ENCODE measurements at regions of chr15 and their contacts with region 1.

Region 1: GRCh38 chr15:91852741-91853510 is 582 bp upstream of the SLCO3A1 start:
- DNase-seq: peak; percentile 80
- H3K4me3 Mint-ChIP-seq: peak overlapping the region; percentile 77
- H3K27ac Mint-ChIP-seq: peak overlapping the region; percentile 77
- H3K4me1 Mint-ChIP-seq: peaks cover 58% of the 10 kb centered on the region
- H3K27me3 Mint-ChIP-seq: no peaks in the 10 kb centered on the region

Region 2: DNA sequence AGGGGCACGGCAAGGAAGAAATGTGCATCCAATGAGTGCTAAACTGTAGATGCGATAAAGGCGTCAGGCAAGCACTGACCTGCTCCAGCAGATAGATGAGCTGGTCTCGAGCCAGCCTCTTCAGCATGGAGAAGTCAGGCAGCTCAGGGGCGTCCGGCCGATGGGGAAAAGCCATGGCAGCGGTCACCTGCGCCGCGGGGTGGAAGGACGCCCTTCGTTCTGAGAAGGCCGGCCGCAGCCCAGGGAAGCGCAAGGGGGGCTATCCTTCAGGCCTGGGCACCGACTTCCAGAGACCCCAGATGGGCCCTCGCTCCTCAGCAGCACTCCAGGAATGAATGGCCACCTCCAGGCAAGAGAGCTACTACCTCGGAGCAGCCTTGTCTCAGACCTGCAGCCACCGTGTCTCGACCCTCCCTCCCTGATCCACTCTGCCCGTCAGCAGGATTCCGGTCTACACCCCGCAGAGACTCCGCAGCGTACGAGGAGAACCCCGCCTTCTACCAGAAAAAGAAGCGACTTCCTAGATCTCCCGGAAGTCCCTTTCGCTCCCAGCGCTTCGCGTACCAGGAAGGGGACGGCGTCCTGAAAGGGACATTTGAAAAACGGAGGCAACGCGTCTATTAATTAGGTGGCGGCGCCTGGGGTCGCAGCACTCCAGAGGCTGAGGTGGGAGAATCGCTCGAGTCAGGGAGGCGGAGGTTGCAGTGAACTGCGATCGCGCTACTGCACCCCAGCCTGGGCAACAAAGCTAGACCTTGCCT is 830.7 kb before region 1 on chr15 and contains the start of gene VPS33B:
- CTCF ChIA-PET with region 1: no interaction called
- POLR2A ChIA-PET with region 1: no interaction called
- intact Hi-C with region 1: loop called (anchors 10 kb)
- DNase-seq: peak; percentile 87
- H3K4me3 Mint-ChIP-seq: peak within 1 kb of the TSS; percentile 89
- H3K27ac Mint-ChIP-seq: peak within 1 kb of the TSS; percentile 90
- H3K4me1 Mint-ChIP-seq: peaks cover 32% of the 10 kb centered on the region
- H3K27me3 Mint-ChIP-seq: no peaks in the 10 kb centered on the region
- total RNA-seq, gene VPS33B: 26.4 to 26.5 TPM

Region 3: DNA sequence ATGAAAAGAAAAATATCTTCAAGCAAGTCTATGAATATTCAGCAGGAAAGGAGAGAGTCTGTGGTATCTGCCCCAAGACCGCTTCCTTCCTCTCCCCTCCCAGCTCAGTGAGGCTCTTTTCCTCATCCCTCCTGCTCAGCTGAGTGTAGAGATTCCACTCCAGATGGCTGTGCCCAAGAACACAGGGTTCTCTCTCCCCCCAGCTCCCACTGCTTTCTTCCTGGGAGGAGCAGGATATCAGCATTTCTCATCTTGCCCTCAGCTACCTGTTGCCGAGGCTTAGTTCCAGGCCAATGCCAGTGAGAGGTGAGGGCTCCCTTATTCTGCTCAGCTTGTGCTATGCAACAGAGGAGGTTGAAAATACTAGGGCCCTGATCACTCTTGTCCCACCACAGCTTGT is 540.9 kb before region 1 on chr15:
- CTCF ChIA-PET with region 1: no interaction called
- POLR2A ChIA-PET with region 1: no interaction called
- intact Hi-C with region 1: loop called (anchors 2 kb)
- DNase-seq: peak; percentile 44
- H3K4me3 Mint-ChIP-seq: no peak overlapping the region
- H3K27ac Mint-ChIP-seq: no peak overlapping the region
- H3K4me1 Mint-ChIP-seq: peaks cover 62% of the 10 kb centered on the region
- H3K27me3 Mint-ChIP-seq: peaks cover 3% of the 10 kb centered on the region

Region 4: DNA sequence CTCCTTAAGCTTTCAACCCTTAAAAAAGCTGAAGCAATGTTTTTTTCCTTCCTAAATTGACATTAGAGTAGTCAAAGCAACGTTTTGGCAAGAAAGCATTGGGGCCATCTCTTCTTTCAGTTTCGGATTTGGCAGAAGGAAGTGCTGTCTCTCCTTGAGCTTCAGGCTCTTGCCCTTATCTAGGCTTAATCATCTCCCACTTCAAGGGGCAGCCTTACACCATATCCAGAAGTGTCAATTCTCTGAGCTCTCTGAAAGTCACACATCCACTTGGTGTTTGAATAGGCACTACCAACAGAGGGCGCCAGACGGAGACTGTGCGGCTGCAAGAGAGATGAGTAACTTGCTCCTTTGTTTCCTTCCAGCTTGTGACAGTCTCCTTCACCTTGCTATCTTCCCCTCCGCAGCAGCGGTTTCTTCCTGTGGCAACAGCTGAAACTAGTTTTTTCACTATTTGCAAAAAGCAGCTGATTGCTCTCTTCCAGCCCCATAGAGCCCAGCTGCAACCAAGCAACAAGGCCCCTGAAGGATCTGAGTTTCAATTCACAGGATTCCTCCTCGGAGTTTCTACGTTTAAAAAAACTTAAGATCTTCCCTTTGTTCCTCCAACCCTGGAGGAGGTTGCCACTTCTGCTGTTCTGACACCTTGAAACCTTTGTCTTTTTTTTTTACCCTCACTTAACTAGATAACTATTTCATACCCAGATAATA is 146.4 kb before region 1 on chr15:
- CTCF ChIA-PET with region 1: interaction called, 32 read pairs
- POLR2A ChIA-PET with region 1: interaction called, 6 read pairs
- intact Hi-C with region 1: loop called (anchors 2 kb)
- DNase-seq: peak; percentile 91
- H3K4me3 Mint-ChIP-seq: no peak overlapping the region
- H3K27ac Mint-ChIP-seq: no peak overlapping the region
- H3K4me1 Mint-ChIP-seq: peaks cover 14% of the 10 kb centered on the region
- H3K27me3 Mint-ChIP-seq: no peaks in the 10 kb centered on the region

Region 5: DNA sequence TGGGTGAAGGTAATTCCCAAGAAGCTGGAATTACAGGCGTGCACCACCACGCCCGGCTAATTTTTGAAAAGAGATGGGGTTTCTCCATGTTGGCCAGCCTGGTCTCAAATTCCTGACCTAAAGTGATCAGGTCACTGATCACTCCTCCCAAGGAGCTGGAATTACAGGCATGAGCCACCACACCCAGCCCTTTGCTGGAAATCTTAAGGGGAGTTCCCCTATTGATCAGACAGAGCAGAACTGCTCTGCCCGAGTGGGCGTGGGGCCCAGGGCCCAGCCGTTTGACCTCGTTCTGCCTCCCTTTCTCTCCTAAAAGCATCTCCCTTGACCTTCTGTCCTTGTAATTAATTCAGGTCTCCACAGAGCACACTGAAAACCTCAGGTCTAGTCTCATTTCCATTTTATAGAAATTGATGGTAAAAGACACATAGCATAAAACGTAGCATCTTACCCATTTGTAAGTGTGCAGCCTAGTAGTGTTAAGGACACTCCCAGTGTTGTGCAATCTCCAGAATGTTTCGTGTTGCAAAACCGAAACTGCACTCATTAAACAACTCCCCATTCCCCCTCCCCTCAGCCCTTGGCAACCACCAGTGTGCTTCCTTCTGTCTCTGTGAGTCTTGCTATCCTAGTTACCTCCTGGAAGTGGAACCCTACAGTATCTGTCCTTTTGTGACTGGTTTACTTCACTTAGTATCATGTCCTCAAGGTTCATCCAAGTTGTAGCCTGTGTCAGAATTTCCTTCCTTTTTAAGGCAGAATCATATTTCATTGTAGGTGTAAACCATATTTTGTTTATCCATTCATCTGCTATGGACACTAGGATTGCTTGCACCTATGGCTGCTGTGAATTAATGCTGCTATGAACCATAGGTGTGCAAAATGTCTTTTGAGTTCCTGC is 90.0 kb after region 1 on chr15:
- CTCF ChIA-PET with region 1: interaction called, 6 read pairs
- POLR2A ChIA-PET with region 1: no interaction called
- intact Hi-C with region 1: loop called (anchors 1 kb)
- DNase-seq: peak; percentile 68
- H3K4me3 Mint-ChIP-seq: peak overlapping the region; percentile 30
- H3K27ac Mint-ChIP-seq: peak overlapping the region; percentile 21
- H3K4me1 Mint-ChIP-seq: peaks cover 57% of the 10 kb centered on the region
- H3K27me3 Mint-ChIP-seq: no peaks in the 10 kb centered on the region

Region 6: DNA sequence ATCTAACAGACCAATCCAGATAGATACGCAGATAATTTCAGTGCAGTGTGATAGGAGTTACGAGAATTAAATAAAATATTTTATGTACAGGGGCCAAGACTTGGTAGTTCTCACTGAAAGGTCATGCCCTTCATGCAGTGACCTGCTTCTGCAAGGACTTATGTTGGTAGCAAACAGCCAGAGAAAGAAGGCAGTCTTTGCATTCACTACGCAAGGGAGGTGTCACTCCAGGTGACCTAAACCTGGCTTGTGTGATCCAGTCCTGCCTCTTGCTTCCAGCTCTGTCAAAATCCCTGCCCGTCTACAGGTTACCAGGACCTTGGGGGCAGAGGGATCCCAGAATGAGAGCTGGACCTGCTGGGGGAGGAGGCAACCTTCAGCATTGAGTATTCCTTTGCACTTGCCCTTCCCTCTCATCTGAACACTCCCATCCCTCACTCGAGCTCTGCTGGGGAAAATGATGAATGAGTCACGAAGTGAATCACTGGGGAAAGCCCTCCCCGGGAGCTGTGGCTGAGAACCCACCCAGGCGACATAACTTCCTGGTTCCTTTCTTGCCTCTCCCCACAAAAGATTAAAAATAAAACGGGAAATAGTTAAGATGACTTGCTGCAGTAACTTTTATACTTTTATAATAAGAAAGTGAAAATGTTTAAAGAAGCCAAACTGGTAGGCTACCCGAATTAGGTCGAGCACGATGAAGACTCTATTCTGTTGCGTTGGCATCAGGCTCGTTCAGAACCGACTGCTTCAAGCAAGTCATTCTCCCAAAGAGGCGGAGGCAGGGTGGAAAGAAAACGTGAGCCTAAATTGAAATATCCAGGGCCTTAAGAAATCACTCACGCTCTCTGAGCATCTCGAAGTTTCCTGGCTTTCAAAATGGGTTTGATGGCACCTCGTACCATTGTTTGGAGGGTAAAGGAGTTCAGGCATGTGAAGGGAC is 216.7 kb after region 1 on chr15:
- CTCF ChIA-PET with region 1: interaction called, 173 read pairs
- POLR2A ChIA-PET with region 1: no interaction called
- intact Hi-C with region 1: loop called (anchors 2 kb)
- DNase-seq: peak; percentile 75
- H3K4me3 Mint-ChIP-seq: peak overlapping the region; percentile 35
- H3K27ac Mint-ChIP-seq: peak overlapping the region; percentile 10
- H3K4me1 Mint-ChIP-seq: peaks cover 52% of the 10 kb centered on the region
- H3K27me3 Mint-ChIP-seq: no peaks in the 10 kb centered on the region

Region 7: DNA sequence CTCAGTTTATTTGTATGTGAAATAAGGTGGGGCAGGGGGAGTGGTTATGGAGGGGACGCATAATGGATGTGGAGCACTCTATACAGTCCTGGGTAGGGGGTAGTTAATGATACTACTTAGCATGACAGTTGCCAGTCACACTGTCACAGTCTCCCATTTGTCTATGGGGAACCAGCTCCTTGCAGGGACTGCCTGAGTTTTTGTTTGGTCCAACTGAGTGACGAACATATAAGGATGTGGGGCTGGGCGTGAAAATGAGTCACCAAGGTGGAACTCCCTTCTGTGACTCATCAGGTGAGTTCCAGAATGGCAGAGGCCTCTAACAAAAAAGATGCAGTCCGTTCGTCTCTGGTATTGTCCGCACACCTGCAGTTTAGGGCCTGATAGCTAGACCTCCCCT is 305.5 kb after region 1 on chr15:
- CTCF ChIA-PET with region 1: interaction called, 3 read pairs
- POLR2A ChIA-PET with region 1: no interaction called
- intact Hi-C with region 1: loop called (anchors 10 kb)
- DNase-seq: peak; percentile 74
- H3K4me3 Mint-ChIP-seq: no peak overlapping the region
- H3K27ac Mint-ChIP-seq: no peak overlapping the region
- H3K4me1 Mint-ChIP-seq: peaks cover 19% of the 10 kb centered on the region
- H3K27me3 Mint-ChIP-seq: no peaks in the 10 kb centered on the region